ENCODE measurements at regions of chr6 and their contacts with region 1.

Region 1: DNA sequence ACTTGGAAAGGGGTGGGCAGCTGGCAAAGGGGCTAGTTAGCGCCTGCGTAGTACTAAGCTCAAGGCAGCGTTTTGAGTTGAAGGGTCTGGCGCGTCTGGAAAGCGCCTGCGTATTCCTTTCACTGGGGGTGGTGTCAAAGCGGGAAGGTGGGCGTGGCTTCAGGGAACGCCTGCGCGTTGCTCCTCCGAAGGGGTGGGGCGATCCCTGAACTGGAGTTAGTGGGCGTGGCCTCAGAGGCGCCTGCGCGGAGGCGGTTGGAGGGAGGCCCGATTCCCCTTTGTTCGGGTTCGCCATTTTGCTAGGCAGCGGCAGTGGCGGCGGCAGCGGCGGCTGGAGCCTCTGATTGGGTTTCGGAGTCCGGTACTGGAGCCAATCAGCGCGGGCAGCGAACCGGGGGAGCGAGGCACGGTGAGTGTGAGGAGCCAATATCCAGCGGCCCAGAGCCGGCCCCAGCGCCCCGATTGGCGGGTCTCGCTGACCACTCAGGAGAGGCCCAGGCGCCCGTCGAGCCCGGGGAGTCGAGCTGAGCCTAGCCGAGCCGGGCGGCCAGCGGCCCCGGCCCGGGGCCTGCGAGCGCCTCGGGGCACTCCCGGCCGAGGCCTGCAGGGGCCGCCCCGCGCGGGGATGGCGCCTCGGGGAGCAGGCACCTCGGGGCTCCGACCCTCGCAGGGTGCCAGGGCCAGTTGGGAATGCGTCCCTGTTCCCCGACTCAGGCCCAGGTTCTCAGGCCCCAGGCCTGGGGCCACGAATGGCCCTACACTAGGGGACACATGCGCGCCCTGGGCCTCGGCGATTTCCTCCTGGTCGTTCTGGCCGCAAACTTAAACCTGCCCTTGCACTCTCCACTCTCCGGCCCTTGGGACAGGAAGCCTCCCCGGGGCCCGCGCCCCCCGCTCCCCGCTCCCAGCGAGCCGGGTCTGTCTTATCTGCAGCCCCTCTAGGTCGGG is at the start of gene NFYA:
- DNase-seq: peak; percentile 100
- H3K4me3 Mint-ChIP-seq: peak within 1 kb of the TSS; percentile 97
- H3K27ac Mint-ChIP-seq: peak within 1 kb of the TSS; percentile 100
- H3K4me1 Mint-ChIP-seq: peaks cover 59% of the 10 kb centered on the region
- H3K27me3 Mint-ChIP-seq: peaks cover 4% of the 10 kb centered on the region
- total RNA-seq, gene NFYA: 31.2 TPM in 2 replicates

Region 2: DNA sequence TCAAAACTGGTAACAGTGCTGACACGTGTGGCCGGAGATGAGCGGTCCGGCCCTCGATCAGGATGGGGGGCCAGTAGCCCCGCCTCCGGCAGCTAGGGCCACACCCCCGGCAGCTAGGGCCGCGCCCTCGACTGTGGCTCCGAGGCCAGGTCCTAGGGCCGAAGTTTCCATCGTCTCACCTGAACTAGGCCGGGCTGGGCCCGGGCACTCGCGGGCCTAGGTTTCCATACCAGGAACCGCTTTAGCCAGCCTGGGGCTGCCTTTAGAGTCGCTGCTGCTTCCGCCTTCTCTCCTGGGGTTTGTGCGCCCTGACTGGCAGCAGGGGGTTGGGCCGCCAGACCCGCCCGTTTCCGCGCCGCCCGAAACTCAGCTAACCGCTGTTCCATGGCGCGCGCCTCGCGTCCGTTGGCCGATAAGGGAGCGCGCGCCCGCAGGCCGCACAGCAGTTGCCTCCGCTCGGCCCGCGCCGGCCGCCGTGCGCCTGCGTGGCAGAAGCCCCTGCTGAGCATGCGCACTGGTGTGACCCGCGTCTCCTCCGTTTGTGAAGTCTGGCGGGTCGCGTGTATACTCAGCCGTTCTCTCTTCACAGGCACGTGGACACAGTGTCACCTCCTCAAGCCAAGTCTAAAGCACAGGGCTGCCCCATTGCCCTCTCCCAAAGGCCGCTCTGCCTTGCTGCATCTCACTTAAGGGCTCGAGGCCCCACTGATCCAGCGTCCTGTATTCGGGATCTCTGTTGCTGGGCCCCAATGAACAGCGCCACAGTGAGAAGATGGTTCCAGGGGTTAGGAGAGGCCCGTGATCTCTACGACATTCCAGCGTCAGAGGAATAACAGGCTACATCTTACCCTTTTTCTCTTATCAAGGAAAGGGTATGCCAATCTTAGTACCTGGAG is 1958.0 kb before region 1 on chr6 and contains the start of gene SAYSD1:
- intact Hi-C with region 1: loop called (anchors 10 kb)
- DNase-seq: peak; percentile 98
- H3K4me3 Mint-ChIP-seq: peak within 1 kb of the TSS; percentile 87
- H3K27ac Mint-ChIP-seq: peak within 1 kb of the TSS; percentile 97
- H3K4me1 Mint-ChIP-seq: peaks cover 51% of the 10 kb centered on the region
- H3K27me3 Mint-ChIP-seq: no peaks in the 10 kb centered on the region
- total RNA-seq, gene SAYSD1: 13.7 and 14.8 TPM in 2 replicates

Region 3: DNA sequence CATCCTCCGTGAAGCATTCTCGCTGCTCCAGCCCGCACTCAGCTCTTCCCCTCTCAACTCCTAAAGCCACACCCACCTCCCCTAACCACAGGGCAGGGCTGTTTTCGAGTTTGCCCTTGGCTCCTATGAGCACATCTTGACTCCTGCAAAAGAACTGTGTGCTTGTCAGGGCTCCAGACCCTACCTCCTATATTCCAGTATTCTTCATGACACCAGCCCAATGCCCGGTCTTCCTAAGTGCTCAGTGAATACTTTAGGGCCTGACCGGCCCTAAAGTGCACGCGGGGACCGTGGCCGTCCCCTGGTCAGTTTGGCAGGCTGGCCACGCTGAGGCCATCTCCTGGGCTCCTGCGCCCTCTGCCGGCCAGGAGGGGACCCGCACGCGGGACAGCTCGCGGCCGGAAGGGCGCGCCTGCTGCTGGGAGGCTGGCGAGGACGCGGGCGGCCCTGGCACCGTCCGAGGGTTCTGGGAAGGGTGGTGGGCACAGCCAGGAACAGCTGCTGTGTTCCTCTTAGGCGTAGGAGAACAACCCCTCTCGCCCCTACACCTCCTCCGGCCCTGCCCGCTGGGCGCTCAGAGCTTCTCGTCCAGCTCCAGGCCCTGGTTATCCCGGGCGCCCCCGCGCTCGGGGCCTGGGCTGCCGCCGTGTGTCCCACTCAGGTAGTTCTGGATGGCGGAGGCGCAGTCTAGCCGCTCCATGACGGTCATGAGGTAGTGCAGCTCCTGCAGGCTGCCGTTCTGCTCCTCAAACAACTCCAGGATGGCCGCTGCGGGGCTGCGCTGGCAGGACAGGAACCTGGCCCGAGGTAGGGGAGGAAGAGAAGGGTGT is 44.9 kb before region 1 on chr6:
- intact Hi-C with region 1: loop called (anchors 1 kb)
- DNase-seq: peak; percentile 96
- H3K4me3 Mint-ChIP-seq: peak overlapping the region; percentile 91
- H3K27ac Mint-ChIP-seq: peak overlapping the region; percentile 90
- H3K4me1 Mint-ChIP-seq: peaks cover 25% of the 10 kb centered on the region
- H3K27me3 Mint-ChIP-seq: no peaks in the 10 kb centered on the region

Region 4: DNA sequence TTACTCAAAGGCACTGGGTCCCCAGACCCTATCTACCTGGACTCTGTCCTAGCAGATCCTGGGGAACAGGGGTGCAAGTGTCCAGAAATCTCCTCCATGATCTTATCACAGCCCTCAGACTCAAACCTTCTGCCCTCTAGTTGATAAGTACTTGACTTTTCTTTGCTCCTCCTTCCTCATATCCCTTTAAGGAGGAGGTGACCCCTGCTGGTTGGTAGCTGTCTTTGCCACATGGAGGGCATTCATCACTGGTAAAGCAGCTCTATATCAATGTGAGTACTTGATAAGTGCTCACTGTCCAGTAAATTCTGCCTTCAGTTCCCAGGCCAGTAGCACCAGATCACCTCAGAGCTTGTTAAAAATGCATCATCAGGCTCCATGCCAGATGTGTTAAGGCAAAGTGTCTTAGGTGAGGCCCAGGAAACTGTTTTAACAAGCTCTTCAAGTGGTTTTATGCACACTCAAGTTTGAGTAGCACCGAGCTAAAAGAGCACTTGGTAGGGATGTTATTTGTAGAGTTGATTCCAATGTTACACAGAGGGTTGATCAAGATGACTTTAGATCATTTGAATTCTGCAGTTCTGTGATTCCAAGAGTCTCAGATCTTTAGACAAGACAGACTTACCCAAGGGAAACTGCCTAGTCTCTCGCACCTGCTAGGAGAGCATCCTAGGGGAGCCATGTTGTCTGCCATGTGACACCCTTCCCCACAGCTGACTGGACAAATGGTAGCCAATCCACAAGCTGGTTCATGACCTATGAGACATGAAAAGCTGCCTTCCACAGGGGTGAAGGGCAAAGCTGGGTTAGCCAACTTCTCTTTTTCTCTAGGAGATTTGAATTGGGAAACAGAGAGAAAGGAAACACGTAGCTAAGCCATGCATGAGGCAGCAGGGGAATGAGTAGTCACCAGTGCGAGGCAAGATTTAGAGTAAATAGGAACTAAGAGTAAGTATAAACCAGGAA is 109.4 kb after region 1 on chr6:
- intact Hi-C with region 1: loop called (anchors 5 kb)
- DNase-seq: peak; percentile 87
- H3K4me3 Mint-ChIP-seq: no peak overlapping the region
- H3K27ac Mint-ChIP-seq: no peak overlapping the region
- H3K4me1 Mint-ChIP-seq: peaks cover 28% of the 10 kb centered on the region
- H3K27me3 Mint-ChIP-seq: peaks cover 5% of the 10 kb centered on the region

Region 5: DNA sequence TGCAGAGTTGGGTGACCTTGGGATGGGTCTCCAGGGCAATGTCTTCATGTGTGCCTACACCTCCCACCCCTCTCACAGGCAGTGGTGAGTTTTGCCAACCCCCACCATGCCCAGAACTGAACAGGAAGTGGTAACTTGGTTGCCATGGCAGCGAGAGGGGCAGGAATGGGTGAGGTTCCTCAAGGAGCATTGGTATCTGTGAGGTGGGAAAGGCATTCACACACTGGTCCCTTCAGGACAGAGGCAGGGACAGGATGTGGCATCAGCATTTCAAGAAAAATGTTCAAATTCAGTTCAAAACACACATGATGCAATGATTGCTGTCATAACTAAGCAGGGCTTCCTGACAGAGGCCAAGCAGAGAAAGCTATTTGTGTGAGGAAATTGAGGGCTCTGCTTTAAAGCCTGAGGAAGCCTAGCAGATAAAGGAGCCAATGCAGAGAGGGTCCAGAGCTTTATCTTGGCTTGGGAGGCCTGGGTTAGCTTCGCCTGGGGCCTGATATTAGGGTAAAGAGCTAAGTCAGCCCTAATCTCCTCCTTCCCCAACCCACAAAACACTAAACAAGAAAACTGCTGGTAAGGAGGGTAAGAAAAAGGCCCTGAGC is 127.4 kb after region 1 on chr6:
- intact Hi-C with region 1: loop called (anchors 1 kb)
- DNase-seq: peak; percentile 92
- H3K4me3 Mint-ChIP-seq: peak overlapping the region; percentile 80
- H3K27ac Mint-ChIP-seq: peak overlapping the region; percentile 94
- H3K4me1 Mint-ChIP-seq: peaks cover 51% of the 10 kb centered on the region
- H3K27me3 Mint-ChIP-seq: peaks cover 2% of the 10 kb centered on the region

Region 6: DNA sequence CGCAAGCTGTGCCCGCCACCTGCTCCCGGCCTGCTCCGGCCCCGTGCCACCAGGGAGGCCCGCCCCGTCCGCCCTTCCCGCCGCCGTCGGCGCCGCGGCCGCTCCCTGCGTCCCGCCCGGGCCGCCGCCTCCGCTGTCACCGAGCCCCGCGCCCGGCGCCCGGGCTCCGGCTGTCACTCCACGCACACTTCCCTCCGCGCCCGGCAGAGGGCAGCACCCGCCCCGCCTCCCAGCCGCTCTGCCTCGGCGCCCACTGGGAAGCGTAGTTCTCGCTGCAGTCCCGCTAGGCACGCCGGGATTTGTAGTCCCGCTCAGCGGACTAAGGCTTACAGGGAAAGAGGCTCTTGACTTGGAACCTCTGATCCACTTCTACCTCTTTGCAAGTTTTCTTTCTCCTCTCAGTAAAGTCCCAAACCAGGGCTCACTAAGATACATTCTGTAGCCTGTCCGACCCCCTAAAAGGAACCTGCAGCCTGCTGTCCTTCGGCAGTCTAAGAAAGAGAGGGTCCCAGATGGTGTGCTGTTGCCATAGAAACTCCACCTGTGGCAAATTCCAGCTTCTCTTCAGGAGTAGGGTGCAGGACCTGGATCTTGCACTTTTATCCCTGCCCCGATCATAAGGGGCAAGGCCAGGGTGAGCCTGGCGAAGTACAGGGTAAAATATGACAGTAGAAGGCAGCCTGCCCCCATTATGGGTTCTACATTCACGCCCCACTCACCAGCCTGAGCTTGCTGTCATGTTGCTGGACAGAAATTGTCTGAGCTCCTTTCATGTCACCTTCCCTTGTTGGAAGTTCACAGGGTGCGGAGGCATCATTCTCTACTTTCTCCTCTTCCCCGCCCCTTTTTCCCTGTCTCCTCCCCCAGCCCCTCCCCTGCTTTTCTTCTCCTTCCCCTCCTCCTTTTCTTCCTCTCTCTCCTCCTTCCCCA is 662.7 kb after region 1 on chr6 and contains the start of gene TFEB:
- intact Hi-C with region 1: loop called (anchors 10 kb)
- DNase-seq: peak; percentile 99
- H3K4me3 Mint-ChIP-seq: peak within 1 kb of the TSS; percentile 86
- H3K27ac Mint-ChIP-seq: peak within 1 kb of the TSS; percentile 62
- H3K4me1 Mint-ChIP-seq: peaks cover 30% of the 10 kb centered on the region
- H3K27me3 Mint-ChIP-seq: no peaks in the 10 kb centered on the region
- total RNA-seq, gene TFEB: 14.1 and 14.9 TPM in 2 replicates